T-cell (primary cell): ENCODE measurements at regions of chr9 and their contacts with region 1.

Region 1: DNA sequence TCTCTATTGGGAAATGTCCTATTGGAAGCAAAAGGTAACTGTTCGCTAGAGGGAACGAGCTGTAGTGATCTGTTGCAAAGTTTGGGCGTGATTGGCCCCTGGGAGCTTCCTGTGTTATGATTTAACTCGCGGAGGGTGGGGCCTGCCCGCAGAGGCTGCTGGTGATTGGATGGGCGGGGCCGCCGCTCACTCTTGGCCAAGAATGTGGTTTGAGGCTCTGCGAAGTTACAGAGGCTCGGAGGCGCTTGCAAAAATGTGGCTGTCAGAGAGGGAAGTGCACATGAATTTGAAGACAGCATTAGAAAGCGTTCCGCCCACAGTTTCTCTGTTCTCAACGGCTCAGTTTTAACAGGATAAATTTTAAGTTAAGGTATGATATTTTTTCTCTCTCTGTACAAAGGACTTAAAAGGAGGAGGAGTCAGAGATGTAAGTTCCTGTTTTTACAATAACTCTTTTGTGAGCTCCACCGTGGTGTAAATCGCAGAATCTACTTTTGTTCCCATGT is 46.9 kb downstream of the CNTRL start:
- DNase-seq: peak; percentile 87 to 99 (median 97)
- ATAC-seq: peak; percentile 96 to 100 (median 99)
- H3K4me3 ChIP-seq: peak overlapping the region; percentile 60 to 66
- H3K4me3 Mint-ChIP-seq: peak overlapping the region; percentile 85 to 89 (median 86)
- H3K27ac ChIP-seq: peak overlapping the region; percentile 77
- H3K27ac Mint-ChIP-seq: peak overlapping the region; percentile 97
- H3K4me1 ChIP-seq: peaks cover 21 to 35% of the 10 kb centered on the region in 2 experiments
- H3K4me1 Mint-ChIP-seq: peaks cover 35 to 52% (median 50%) of the 10 kb centered on the region in 3 donors
- H3K27me3 ChIP-seq: no peaks in the 10 kb centered on the region
- H3K27me3 Mint-ChIP-seq: no peaks in the 10 kb centered on the region

Region 2: GRCh38 chr9:121107041-121107440 is 14.6 kb before region 1 on chr9:
- CTCF ChIA-PET with region 1: interaction called, 3 to 10 read pairs
- POLR2A ChIA-PET with region 1: interaction called in 1 of 2 experiments, 4 read pairs
- DNase-seq: peak in 2 of 35 experiments; percentile 4 to 55
- ATAC-seq: peak; percentile 79 to 99 (median 96)
- H3K4me3 ChIP-seq: no peak overlapping the region
- H3K4me3 Mint-ChIP-seq: no peak overlapping the region
- H3K27ac ChIP-seq: no peak overlapping the region
- H3K27ac Mint-ChIP-seq: peak overlapping the region; percentile 32 to 83
- H3K4me1 ChIP-seq: peaks cover 2 to 3% of the 10 kb centered on the region in 2 experiments
- H3K4me1 Mint-ChIP-seq: peaks cover 21 to 36% (median 24%) of the 10 kb centered on the region in 3 donors
- H3K27me3 ChIP-seq: no peaks in the 10 kb centered on the region
- H3K27me3 Mint-ChIP-seq: no peaks in the 10 kb centered on the region

Region 3: GRCh38 chr9:121133149-121133816 is 11.6 kb after region 1 on chr9:
- CTCF ChIA-PET with region 1: interaction called in 1 of 2 experiments, 10 read pairs
- POLR2A ChIA-PET with region 1: interaction called, 4 read pairs
- DNase-seq: peak; percentile 68 to 91 (median 85)
- ATAC-seq: peak; percentile 99 to 100 (median 100)
- H3K4me3 ChIP-seq: peak overlapping the region; percentile 23 to 51
- H3K4me3 Mint-ChIP-seq: peak overlapping the region; percentile 55 to 70 (median 62)
- H3K27ac ChIP-seq: peak overlapping the region; percentile 63
- H3K27ac Mint-ChIP-seq: peak overlapping the region; percentile 91 to 94
- H3K4me1 ChIP-seq: peaks cover 15 to 21% of the 10 kb centered on the region in 2 experiments
- H3K4me1 Mint-ChIP-seq: peaks cover 63 to 82% (median 76%) of the 10 kb centered on the region in 3 donors
- H3K27me3 ChIP-seq: no peaks in the 10 kb centered on the region
- H3K27me3 Mint-ChIP-seq: no peaks in the 10 kb centered on the region

Region 4: DNA sequence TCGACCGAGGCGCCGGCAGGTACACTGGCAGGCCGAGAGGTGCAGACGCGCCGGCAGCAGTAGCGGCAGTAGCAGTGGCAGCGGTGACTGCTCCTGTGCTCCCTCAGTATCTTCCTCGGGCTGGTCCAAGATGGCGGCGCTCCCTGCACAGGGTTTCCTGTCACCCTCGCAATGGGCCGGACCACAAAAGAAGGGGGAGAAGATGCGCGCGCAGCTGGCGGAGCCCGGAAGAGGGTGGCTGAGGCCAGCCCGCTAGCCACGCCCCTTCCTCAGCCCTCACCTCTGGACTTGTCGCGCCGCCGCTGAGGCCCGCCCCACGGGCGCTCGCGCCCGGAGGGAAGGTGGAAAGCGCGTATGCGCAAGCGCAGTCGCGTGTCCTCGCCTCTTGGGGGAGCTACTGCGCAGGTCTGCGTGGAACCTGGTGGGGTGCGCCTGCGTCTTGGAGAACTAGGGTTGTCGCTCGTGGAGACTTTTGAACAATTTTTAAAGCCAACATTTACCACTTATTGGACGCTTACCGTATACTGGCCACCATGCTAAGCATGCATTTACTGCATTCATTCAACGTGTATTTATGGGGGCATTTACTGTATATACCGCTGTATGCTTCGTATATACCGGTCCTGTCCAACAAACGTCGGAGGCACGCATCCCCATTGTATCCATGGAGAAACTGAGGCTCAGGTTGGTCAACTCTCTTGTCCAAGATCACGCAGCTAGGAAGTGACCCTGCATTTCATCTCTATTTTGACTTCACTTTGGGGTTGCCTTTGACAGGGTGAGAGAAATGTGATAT is 80.3 kb after region 1 on chr9 and contains the start of gene RAB14:
- CTCF ChIA-PET with region 1: interaction called in 1 of 2 experiments, 11 read pairs
- POLR2A ChIA-PET with region 1: interaction called, 4 to 8 read pairs
- DNase-seq: peak; percentile 100
- ATAC-seq: peak; percentile 88 to 92 (median 90)
- H3K4me3 ChIP-seq: peak within 1 kb of the TSS; percentile 81 to 87
- H3K4me3 Mint-ChIP-seq: peak within 1 kb of the TSS; percentile 88 to 95 (median 94)
- H3K27ac ChIP-seq: peak within 1 kb of the TSS; percentile 73
- H3K27ac Mint-ChIP-seq: peak within 1 kb of the TSS; percentile 92 to 95
- H3K4me1 ChIP-seq: peaks cover 7 to 34% of the 10 kb centered on the region in 2 experiments
- H3K4me1 Mint-ChIP-seq: peaks cover 46 to 53% (median 50%) of the 10 kb centered on the region in 3 donors
- H3K27me3 ChIP-seq: no peaks in the 10 kb centered on the region
- H3K27me3 Mint-ChIP-seq: no peaks in the 10 kb centered on the region
- total RNA-seq, gene RAB14: 42.4 to 56.6 (median 50.5) TPM